ENCODE measurements at regions of chr1 and their contacts with region 1.

Region 1: DNA sequence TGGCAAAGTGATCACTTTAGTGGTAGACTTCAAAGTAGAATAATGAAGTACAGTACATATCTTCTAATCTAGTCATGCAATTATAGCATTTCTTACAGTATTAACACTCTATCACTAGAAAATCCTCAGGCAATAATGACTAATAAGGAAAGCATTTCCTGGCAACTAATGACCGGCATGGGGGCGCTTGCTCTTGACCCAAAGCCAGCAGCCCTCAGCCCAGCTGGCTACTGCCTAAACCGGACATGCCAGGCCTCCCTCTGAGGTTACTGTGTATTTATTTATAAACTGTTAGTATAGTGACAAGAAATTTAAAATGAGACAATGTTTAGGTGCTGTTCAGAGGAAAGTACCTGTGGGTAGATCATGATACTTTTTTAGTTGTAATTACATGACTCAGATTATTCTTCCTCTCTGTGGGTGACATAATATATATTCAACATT is 633.8 kb downstream of the PTPRC start:
- DNase-seq: peak; percentile 97
- H3K4me3 ChIP-seq: no peak overlapping the region
- H3K27ac ChIP-seq: peak overlapping the region; percentile 97
- H3K4me1 ChIP-seq: peaks cover 25% of the 10 kb centered on the region
- H3K27me3 ChIP-seq: no peaks in the 10 kb centered on the region
- CTCF ChIP-seq: no peak
- POLR2A ChIP-seq: peak; percentile 49

Region 2: GRCh38 chr1:198669023-198669698 is 603.5 kb before region 1 on chr1:
- CTCF ChIA-PET with region 1: no interaction called
- POLR2A ChIA-PET with region 1: no interaction called
- dilution Hi-C with region 1: no loop called
- intact Hi-C with region 1: loop called (anchors 1 kb)
- DNase-seq: peak; percentile 78
- H3K4me3 ChIP-seq: no peak overlapping the region
- H3K27ac ChIP-seq: peak overlapping the region; percentile 80
- H3K4me1 ChIP-seq: peaks cover 16% of the 10 kb centered on the region
- H3K27me3 ChIP-seq: no peaks in the 10 kb centered on the region
- CTCF ChIP-seq: no peak
- POLR2A ChIP-seq: peak; percentile 68

Region 3: DNA sequence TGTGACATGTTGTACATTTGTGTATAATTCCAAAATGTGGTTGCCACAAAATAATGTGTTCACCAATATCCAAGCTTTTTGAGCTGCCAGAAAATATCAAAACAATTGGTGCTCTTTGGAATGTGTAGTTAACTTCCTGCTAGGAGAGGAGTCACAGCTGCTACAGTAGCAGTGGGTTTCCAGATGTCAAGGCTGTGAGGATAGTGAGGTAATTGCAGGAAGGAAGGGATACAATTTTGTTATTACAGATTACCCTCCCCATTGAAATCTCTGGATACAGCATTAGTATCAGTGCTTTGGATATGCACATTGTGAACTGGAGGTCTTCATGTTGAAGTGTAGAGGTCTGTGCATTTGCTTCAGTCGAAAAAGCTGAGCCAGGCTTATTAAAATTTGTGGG is 380.6 kb before region 1 on chr1:
- CTCF ChIA-PET with region 1: no interaction called
- POLR2A ChIA-PET with region 1: no interaction called
- dilution Hi-C with region 1: no loop called
- intact Hi-C with region 1: loop called (anchors 2 kb)
- DNase-seq: peak; percentile 87
- H3K4me3 ChIP-seq: no peak overlapping the region
- H3K27ac ChIP-seq: peak overlapping the region; percentile 74
- H3K4me1 ChIP-seq: peaks cover 44% of the 10 kb centered on the region
- H3K27me3 ChIP-seq: no peaks in the 10 kb centered on the region
- CTCF ChIP-seq: no peak
- POLR2A ChIP-seq: no peak

Region 4: GRCh38 chr1:199290186-199290585 is 17.5 kb after region 1 on chr1:
- CTCF ChIA-PET with region 1: interaction called, 3 read pairs
- POLR2A ChIA-PET with region 1: no interaction called
- dilution Hi-C with region 1: no loop called
- intact Hi-C with region 1: loop called (anchors 2 kb)
- DNase-seq: peak; percentile 41
- H3K4me3 ChIP-seq: no peak overlapping the region
- H3K27ac ChIP-seq: no peak overlapping the region
- H3K4me1 ChIP-seq: peaks cover 13% of the 10 kb centered on the region
- H3K27me3 ChIP-seq: no peaks in the 10 kb centered on the region
- CTCF ChIP-seq: no peak
- POLR2A ChIP-seq: no peak

Region 5: DNA sequence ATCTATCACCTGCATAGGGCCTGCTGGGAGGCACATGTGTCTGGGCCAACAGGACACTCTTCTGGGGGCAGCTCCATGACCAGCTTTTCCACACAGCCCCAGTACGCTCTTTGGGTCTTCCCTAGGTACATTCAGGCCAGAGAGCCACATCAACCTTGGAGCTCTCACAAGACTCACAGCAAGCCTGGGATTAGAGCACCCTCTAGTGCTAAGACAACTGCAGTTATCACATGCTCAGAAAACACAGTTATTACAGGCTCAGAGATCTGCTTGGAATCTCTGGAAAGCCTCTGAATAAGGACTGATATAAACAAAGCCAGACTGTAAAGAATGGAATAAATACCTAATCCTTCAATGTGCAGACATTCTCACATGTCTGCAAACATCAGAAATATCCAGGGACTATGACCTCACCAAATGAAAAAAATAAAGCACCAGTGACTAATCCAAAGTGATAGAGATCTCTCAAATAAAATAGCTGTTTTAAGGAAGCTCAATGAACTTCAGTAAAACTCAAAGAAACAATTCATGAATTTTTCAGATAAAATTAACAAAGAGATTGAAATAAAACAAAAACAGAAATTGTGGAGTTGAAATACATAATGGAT is 191.0 kb after region 1 on chr1:
- CTCF ChIA-PET with region 1: interaction called, 6 read pairs
- POLR2A ChIA-PET with region 1: no interaction called
- dilution Hi-C with region 1: no loop called
- intact Hi-C with region 1: loop called (anchors 1 kb)
- DNase-seq: peak; percentile 71
- H3K4me3 ChIP-seq: no peak overlapping the region
- H3K27ac ChIP-seq: no peak overlapping the region
- H3K4me1 ChIP-seq: peaks cover 5% of the 10 kb centered on the region
- H3K27me3 ChIP-seq: no peaks in the 10 kb centered on the region
- CTCF ChIP-seq: peak; percentile 67 to 68
- POLR2A ChIP-seq: no peak